ENCODE measurements at regions of chr22 and their contacts with region 1.

Region 1: GRCh38 chr22:43187171-43188099 is 501 bp upstream of the TTLL12 start:
- DNase-seq: peak; percentile 93 to 98 (median 97)
- ATAC-seq: peak; percentile 94
- H3K4me3 ChIP-seq: peak overlapping the region; percentile 65
- H3K4me3 Mint-ChIP-seq: peak overlapping the region; percentile 75 to 89 (median 86)
- H3K27ac ChIP-seq: peak overlapping the region; percentile 91
- H3K27ac Mint-ChIP-seq: peak overlapping the region; percentile 94 to 99 (median 98)
- H3K4me1 ChIP-seq: peaks cover 18% of the 10 kb centered on the region in 2 donors
- H3K4me1 Mint-ChIP-seq: peaks cover 5 to 36% (median 24%) of the 10 kb centered on the region in 7 donors
- H3K27me3 ChIP-seq: no peaks in the 10 kb centered on the region
- H3K27me3 Mint-ChIP-seq: peaks cover 0 to 15% (median 0%) of the 10 kb centered on the region in 5 donors

Region 2: GRCh38 chr22:42856865-42857704 is 330.4 kb before region 1 on chr22 and contains the start of gene ARFGAP3:
- CTCF ChIA-PET with region 1: interaction called, 3 read pairs
- POLR2A ChIA-PET with region 1: interaction called, 5 read pairs
- intact Hi-C with region 1: loop called (anchors 1 to 5 kb)
- DNase-seq: peak; percentile 87 to 99 (median 96)
- ATAC-seq: peak; percentile 97
- H3K4me3 ChIP-seq: peak within 1 kb of the TSS; percentile 77
- H3K4me3 Mint-ChIP-seq: peak within 1 kb of the TSS; percentile 84 to 92 (median 88)
- H3K27ac ChIP-seq: peak within 1 kb of the TSS; percentile 93
- H3K27ac Mint-ChIP-seq: peak within 1 kb of the TSS; percentile 80 to 94 (median 89)
- H3K4me1 ChIP-seq: peaks cover 4 to 6% of the 10 kb centered on the region in 2 donors
- H3K4me1 Mint-ChIP-seq: peaks cover 0 to 22% (median 10%) of the 10 kb centered on the region in 7 donors
- H3K27me3 ChIP-seq: no peaks in the 10 kb centered on the region
- H3K27me3 Mint-ChIP-seq: no peaks in the 10 kb centered on the region
- total RNA-seq, gene ARFGAP3: 22.9 to 38.4 (median 31.0) TPM

Region 3: GRCh38 chr22:43088979-43089717 is 98.3 kb before region 1 on chr22 and contains the start of gene TTLL1:
- CTCF ChIA-PET with region 1: no interaction called
- POLR2A ChIA-PET with region 1: no interaction called
- intact Hi-C with region 1: loop called in 1 of 2 experiments (anchors 1 kb)
- DNase-seq: peak; percentile 79 to 90 (median 87)
- ATAC-seq: peak; percentile 93
- H3K4me3 ChIP-seq: peak within 1 kb of the TSS; percentile 49
- H3K4me3 Mint-ChIP-seq: peak within 1 kb of the TSS; percentile 77 to 98 (median 92)
- H3K27ac ChIP-seq: peak within 1 kb of the TSS; percentile 60
- H3K27ac Mint-ChIP-seq: peak within 1 kb of the TSS; percentile 49 to 96 (median 82)
- H3K4me1 ChIP-seq: peaks cover 8 to 13% of the 10 kb centered on the region in 2 donors
- H3K4me1 Mint-ChIP-seq: peaks cover 0 to 19% (median 17%) of the 10 kb centered on the region in 7 donors
- H3K27me3 ChIP-seq: no peaks in the 10 kb centered on the region
- H3K27me3 Mint-ChIP-seq: no peaks in the 10 kb centered on the region
- total RNA-seq, gene TTLL1: 4.6 to 7.7 (median 6.9) TPM

Region 4: DNA sequence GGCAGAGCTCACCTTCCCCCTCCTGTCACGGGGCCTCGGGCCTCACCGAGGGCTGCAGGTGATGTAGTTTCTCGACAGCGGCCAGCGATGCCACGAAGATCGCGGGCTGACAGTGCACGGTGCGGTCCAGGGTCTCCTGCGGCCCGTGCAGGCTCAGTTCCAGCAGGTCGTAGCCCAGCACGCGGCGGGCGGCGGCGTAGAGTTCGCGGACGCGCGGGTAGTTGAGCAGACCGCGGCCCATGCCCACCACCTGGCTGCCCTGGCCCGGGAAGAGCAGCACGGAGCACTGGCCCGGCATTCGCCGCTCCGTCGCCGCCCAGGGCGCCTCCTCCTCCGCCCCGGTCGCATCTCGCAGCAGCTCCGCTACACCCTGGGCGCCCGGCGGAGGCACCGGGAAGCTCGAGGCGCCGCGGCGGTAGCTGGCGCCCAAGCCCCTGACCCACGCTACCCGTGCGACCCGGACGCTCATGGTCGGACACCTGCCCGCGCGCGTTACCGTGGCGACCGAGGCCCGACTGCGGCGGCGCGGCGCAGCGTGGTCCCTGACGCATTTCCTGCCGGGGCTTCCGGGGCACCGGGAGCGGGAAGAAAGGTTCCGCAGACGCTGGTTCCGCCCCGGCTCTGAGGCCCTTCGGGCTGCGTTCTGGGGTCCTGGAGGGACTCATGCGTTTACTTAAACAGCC is 44.4 kb before region 1 on chr22 and contains the start of gene MCAT:
- CTCF ChIA-PET with region 1: interaction called, 5 read pairs
- POLR2A ChIA-PET with region 1: interaction called, 18 read pairs
- intact Hi-C with region 1: loop called (anchors 1 kb)
- DNase-seq: peak; percentile 71 to 92 (median 75)
- ATAC-seq: peak; percentile 90
- H3K4me3 ChIP-seq: peak within 1 kb of the TSS; percentile 79
- H3K4me3 Mint-ChIP-seq: peak within 1 kb of the TSS; percentile 82 to 92 (median 88)
- H3K27ac ChIP-seq: peak within 1 kb of the TSS; percentile 78
- H3K27ac Mint-ChIP-seq: peak within 1 kb of the TSS; percentile 85 to 97 (median 93)
- H3K4me1 ChIP-seq: peaks cover 6 to 7% of the 10 kb centered on the region in 2 donors
- H3K4me1 Mint-ChIP-seq: peaks cover 21 to 53% (median 33%) of the 10 kb centered on the region in 7 donors
- H3K27me3 ChIP-seq: no peaks in the 10 kb centered on the region
- H3K27me3 Mint-ChIP-seq: no peaks in the 10 kb centered on the region
- total RNA-seq, gene MCAT: 7.1 to 17.9 (median 10.5) TPM

Region 5: GRCh38 chr22:43263645-43264514 is 76.4 kb after region 1 on chr22:
- CTCF ChIA-PET with region 1: interaction called, 4 read pairs
- POLR2A ChIA-PET with region 1: interaction called, 3 read pairs
- intact Hi-C with region 1: loop called in 1 of 2 experiments (anchors 10 kb)
- DNase-seq: peak; percentile 11 to 74 (median 43)
- ATAC-seq: peak; percentile 88
- H3K4me3 ChIP-seq: peak overlapping the region; percentile 49
- H3K4me3 Mint-ChIP-seq: peak overlapping the region; percentile 74 to 90 (median 82)
- H3K27ac ChIP-seq: peak overlapping the region; percentile 0
- H3K27ac Mint-ChIP-seq: peak overlapping the region; percentile 4 to 94 (median 63)
- H3K4me1 ChIP-seq: peaks cover 14 to 23% of the 10 kb centered on the region in 2 donors
- H3K4me1 Mint-ChIP-seq: peaks cover 18 to 32% (median 21%) of the 10 kb centered on the region in 7 donors
- H3K27me3 ChIP-seq: no peaks in the 10 kb centered on the region
- H3K27me3 Mint-ChIP-seq: no peaks in the 10 kb centered on the region

Region 6: DNA sequence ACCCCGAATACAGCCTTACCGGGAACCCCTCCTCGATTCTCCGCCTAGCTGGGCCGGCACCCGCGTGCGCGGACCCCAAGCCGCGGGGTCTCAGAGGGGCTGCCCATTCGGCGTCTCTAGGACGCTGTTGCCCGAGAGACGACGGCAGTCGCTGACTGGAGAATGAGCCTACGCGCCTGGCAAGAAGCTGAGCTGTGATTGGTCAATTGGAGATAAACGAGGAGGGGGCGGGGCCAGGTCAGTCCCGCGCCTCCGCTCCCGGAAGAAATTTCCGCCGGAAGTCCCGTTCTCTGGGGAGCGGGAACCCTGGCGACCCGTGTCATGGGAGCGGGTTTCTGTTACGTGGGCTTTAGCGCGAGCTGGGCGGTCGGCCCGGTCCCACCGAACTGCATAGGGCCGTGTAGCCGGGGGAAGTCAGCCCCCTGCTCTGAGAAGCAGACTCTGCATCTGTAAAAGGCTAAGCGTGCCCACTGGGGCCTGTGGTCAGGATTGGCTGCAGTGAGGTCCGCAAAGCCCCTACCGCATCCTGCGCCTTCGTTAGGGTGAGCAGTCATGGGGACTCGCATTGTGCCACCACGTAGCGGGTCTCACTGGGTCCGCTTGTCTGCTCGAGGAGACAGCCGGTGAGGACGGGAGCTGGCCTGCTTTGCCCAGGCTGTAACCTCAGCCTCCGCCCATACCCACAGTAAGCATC is 624.9 kb after region 1 on chr22 and contains the start of gene EFCAB6:
- CTCF ChIA-PET with region 1: no interaction called
- POLR2A ChIA-PET with region 1: no interaction called
- intact Hi-C with region 1: loop called in 1 of 2 experiments (anchors 5 kb)
- DNase-seq: peak; percentile 74 to 88 (median 86)
- ATAC-seq: peak; percentile 97
- H3K4me3 ChIP-seq: peak within 1 kb of the TSS; percentile 93
- H3K4me3 Mint-ChIP-seq: peak within 1 kb of the TSS; percentile 82 to 98 (median 94)
- H3K27ac ChIP-seq: peak within 1 kb of the TSS; percentile 82
- H3K27ac Mint-ChIP-seq: peak within 1 kb of the TSS; percentile 87 to 95 (median 92)
- H3K4me1 ChIP-seq: peaks cover 7 to 10% of the 10 kb centered on the region in 2 donors
- H3K4me1 Mint-ChIP-seq: peaks cover 19 to 35% (median 31%) of the 10 kb centered on the region in 7 donors
- H3K27me3 ChIP-seq: no peaks in the 10 kb centered on the region
- H3K27me3 Mint-ChIP-seq: peaks cover 0 to 2% (median 0%) of the 10 kb centered on the region in 5 donors
- total RNA-seq, gene EFCAB6: 0.16 to 1.4 (median 0.90) TPM in 4 of 5 experiments, not detected in the other